ENCODE measurements at regions of chr5 and their contacts with region 1.

Region 1: DNA sequence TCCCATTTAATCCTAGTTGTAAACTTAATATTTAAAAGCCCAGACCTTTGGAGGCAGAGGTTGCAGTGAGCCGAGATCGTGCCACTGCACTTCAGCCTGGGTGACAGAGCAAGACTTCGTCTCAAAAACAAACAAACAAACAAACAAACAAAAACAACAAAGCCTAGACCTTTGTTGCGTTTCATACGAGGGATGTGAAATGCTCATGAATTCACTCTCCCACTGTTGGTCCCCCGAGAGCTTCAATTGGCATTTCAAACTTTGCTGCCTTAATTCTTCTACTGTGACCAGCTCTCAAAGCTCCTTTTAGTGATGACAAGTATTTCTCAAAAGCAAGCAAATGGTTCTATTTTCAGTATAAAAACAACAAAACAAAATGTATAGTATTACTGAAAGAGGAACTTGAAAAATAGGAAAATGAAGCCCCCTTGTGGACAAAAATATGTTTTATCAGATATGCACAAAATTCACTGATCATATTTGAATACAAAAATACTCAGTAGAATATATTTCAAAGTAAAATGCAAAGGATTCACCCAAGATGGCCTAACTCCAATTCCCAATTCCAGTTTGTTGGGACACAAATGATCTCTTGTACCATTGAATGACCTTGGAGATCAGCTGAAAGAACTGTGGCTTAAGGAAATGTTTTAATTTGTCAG is 140.4 kb downstream of the ESM1 start:
- DNase-seq: peak; percentile 68
- H3K4me3 Mint-ChIP-seq: peak overlapping the region; percentile 56
- H3K27ac Mint-ChIP-seq: peak overlapping the region; percentile 18
- H3K4me1 Mint-ChIP-seq: peaks cover 13% of the 10 kb centered on the region
- H3K27me3 Mint-ChIP-seq: peaks cover 22% of the 10 kb centered on the region

Region 2: GRCh38 chr5:54743997-54744788 is 100.8 kb before region 1 on chr5:
- intact Hi-C with region 1: loop called (anchors 10 kb)
- DNase-seq: peak; percentile 88
- H3K4me3 Mint-ChIP-seq: peak overlapping the region; percentile 57
- H3K27ac Mint-ChIP-seq: peak overlapping the region; percentile 77
- H3K4me1 Mint-ChIP-seq: peaks cover 44% of the 10 kb centered on the region
- H3K27me3 Mint-ChIP-seq: peaks cover 4% of the 10 kb centered on the region

Region 3: GRCh38 chr5:54895816-54896341 is 50.8 kb after region 1 on chr5:
- intact Hi-C with region 1: no loop called
- DNase-seq: peak; percentile 66
- H3K4me3 Mint-ChIP-seq: no peak overlapping the region
- H3K27ac Mint-ChIP-seq: no peak overlapping the region
- H3K4me1 Mint-ChIP-seq: peaks cover 4% of the 10 kb centered on the region
- H3K27me3 Mint-ChIP-seq: peaks cover 72% of the 10 kb centered on the region

Region 4: GRCh38 chr5:55307383-55308253 is 462.6 kb after region 1 on chr5 and contains the starts of genes DHX29 and MTREX:
- intact Hi-C with region 1: no loop called
- DNase-seq: peak; percentile 97
- H3K4me3 Mint-ChIP-seq: no peak within 1 kb of the TSS
- H3K27ac Mint-ChIP-seq: no peak within 1 kb of the TSS
- H3K4me1 Mint-ChIP-seq: peaks cover 22% of the 10 kb centered on the region
- H3K27me3 Mint-ChIP-seq: no peaks in the 10 kb centered on the region
- total RNA-seq, gene DHX29: 18.0 and 18.2 TPM in 2 replicates
- total RNA-seq, gene MTREX: 123 and 128 TPM in 2 replicates